GM12878 (cell line): ENCODE measurements at regions of chr10 and their contacts with region 1.

Region 1: GRCh38 chr10:73848821-73849489 is 25.4 kb downstream of the CAMK2G start:
- DNase-seq: peak; percentile 85
- ATAC-seq: peak; percentile 99
- H3K4me3 ChIP-seq: no peak overlapping the region
- H3K27ac ChIP-seq: no peak overlapping the region
- H3K4me1 ChIP-seq: peaks cover 5% of the 10 kb centered on the region; the same call in 1 of the 2 replicates
- H3K27me3 ChIP-seq: no peaks in the 10 kb centered on the region
- CTCF ChIP-seq: peak; percentile 99 to 100 (median 99); a peak in 5 of 6 replicates
- EP300 ChIP-seq: peak; percentile 93 to 97
- POLR2A ChIP-seq: no peak
- RAD21 ChIP-seq: peak; percentile 99

Region 2: DNA sequence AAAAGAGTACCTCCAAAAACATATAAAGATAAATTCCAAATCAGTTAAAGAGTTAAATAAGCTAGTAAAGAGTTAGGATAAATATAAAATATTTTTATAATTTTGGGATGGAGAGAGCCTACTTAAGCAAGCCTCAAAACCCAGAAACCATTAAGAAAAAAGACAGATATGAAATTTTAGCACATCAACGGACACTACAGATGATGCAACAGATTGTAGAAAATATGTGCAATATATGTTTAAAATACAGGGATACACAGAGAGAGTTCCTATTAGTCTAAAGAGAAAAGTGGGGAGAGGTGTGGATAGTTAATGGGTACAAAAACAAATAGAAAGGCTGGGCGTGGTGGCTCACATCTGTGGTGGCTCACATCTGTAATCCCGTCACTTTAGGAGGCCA is 234.2 kb before region 1 on chr10:
- CTCF ChIA-PET with region 1: no interaction called
- POLR2A ChIA-PET with region 1: no interaction called
- RAD21 ChIA-PET with region 1: no interaction called
- SMC1A ChIA-PET with region 1: no interaction called
- in situ Hi-C with region 1: no loop called
- intact Hi-C with region 1: no loop called
- DNase-seq: no peak
- ATAC-seq: no peak
- H3K4me3 ChIP-seq: no peak overlapping the region
- H3K27ac ChIP-seq: no peak overlapping the region
- H3K4me1 ChIP-seq: no peaks in the 10 kb centered on the region
- H3K27me3 ChIP-seq: no peaks in the 10 kb centered on the region
- CTCF ChIP-seq: no peak
- EP300 ChIP-seq: no peak
- POLR2A ChIP-seq: no peak
- RAD21 ChIP-seq: no peak

Region 3: DNA sequence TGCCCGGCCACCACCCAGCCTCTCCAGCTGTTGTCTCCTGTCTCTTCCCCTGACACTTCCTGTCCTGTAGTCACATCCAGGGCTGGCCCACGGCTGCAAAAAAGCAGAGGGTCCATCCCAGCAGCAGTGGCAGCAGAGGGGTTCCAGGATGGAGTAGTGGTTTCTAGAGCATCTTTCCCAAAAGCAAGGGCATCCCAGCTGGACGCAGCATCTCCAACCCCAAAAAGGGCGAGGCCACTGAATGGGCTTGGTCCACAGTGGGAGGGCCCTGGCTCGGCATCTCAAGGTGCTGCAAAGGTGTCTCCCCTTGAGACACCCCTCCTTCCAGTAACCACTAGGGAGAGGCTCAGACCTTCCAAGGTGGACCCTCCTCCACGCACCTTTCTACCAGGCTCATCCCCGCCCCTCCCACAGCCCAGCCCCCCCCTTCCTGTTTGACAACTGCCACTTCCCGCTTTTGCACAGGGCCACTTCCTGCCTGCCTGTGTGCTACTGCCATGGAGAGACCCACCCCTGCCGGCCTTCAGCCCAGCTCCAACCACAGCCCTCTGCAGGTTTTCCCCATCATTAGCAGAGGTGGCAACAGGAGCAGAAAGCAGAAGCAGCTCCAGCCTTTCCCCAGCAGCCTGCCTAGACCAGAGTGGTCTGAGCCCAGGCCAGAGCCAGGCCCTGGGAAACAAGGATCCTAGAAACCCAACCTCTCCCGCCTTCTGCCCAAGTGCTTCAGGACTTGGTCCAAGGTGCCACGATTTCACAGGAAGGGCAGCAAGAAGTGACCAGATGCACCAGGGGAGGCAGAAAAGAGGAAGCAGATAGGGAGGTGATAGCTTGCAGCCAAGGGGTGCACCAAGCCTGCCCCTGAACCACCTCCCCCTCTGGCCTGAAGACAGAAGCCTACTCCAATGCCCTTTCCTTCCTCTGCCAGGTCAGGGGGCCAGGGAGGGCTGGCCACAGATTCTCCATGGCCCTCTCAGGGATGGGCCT is 16.8 kb after region 1 on chr10:
- CTCF ChIA-PET with region 1: interaction called, 28 read pairs
- POLR2A ChIA-PET with region 1: interaction called, 16 read pairs
- RAD21 ChIA-PET with region 1: interaction called, 19 read pairs
- SMC1A ChIA-PET with region 1: interaction called, 32 read pairs
- in situ Hi-C with region 1: no loop called
- intact Hi-C with region 1: no loop called
- DNase-seq: no peak
- ATAC-seq: peak; percentile 95
- H3K4me3 ChIP-seq: peak overlapping the region; percentile 58; the same call in 1 of the 2 replicates
- H3K27ac ChIP-seq: peak overlapping the region; percentile 84
- H3K4me1 ChIP-seq: peaks cover 24% of the 10 kb centered on the region
- H3K27me3 ChIP-seq: no peaks in the 10 kb centered on the region
- CTCF ChIP-seq: peak in 1 of 3 experiments; percentile 14; a peak in 1 of 6 replicates
- EP300 ChIP-seq: 0 out of 4 replicates have a peak, but pooled peaks of 1 of the 2 experiments have one; percentile 33
- POLR2A ChIP-seq: no peak
- RAD21 ChIP-seq: no peak

Region 4: DNA sequence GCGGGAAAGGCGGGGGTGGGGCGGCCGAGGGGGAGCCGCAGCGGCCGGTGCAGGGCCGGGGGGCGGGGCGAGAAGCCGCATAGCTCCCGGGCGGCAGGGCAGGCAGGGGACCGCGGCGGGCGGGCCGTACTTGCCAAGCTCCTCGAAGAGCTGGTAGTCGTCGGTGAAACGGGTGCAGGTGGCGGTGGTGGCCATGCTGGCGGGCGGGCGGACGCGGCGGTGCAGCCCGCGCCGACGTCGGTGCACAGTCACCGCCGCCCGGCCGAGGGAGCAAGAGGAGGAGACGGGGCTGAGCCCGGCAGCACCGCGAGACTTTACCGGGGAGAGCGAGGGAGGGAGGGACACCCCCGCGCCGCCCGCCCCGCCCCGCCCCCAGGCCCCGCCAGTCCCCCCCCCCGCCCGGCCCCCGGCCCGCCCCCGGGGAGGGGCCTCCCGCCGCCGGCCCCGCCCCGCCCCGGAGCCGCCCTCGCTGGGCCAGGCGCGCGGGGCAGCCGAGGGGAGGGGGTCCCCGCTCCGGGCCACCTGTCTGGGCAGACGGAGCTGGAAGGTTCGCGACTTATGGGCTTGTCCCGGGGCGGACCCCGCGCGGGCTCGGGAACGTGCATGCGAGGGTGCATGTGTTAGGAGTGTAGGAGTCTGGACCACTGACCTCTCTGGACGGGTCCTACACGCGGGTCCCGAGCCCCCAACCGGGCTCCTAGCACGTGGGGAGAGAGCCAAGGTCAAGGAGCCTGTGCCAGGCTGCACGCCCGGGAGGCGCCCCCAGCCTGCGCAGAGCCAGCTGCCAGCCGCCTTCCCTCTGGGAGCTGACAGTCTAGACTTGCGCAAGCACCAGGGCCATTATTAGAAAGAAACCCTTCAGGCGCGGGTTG is 25.5 kb after region 1 on chr10 and contains the start of gene CAMK2G:
- CTCF ChIA-PET with region 1: interaction called, 440 read pairs
- POLR2A ChIA-PET with region 1: interaction called, 24 read pairs
- RAD21 ChIA-PET with region 1: interaction called, 299 read pairs
- SMC1A ChIA-PET with region 1: interaction called, 270 read pairs
- in situ Hi-C with region 1: no loop called
- intact Hi-C with region 1: loop called (anchors 1 kb)
- DNase-seq: no peak
- ATAC-seq: peak; percentile 88
- H3K4me3 ChIP-seq: peak within 1 kb of the TSS; percentile 84
- H3K27ac ChIP-seq: peak within 1 kb of the TSS; percentile 58
- H3K4me1 ChIP-seq: peaks cover 16% of the 10 kb centered on the region
- H3K27me3 ChIP-seq: no peaks in the 10 kb centered on the region
- CTCF ChIP-seq: no peak
- EP300 ChIP-seq: no peak
- POLR2A ChIP-seq: peak; percentile 89
- RAD21 ChIP-seq: no peak
- polyA plus RNA-seq, gene CAMK2G: 5.5 to 6.9 TPM

Region 5: DNA sequence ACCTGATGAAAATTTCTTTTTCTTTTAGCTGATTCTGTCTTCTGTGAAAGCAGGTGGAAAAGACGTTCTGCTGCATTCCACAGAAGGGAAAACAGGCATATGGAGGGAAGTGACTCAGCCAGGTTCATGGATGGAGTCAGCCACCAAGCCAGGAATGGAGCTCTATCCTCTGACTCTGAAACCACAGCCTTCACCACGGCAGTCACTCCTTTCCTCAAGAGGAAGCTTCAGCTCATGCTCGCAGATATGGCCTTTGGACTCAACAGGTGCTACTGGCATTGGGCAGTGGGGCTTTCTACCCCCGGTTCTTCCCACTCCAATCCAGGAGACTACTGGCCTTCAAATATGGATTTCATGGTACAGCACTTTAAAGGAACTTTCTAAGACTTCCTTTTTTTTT is 50.5 kb after region 1 on chr10:
- CTCF ChIA-PET with region 1: interaction called, 10 read pairs
- POLR2A ChIA-PET with region 1: no interaction called
- RAD21 ChIA-PET with region 1: interaction called, 3 read pairs
- SMC1A ChIA-PET with region 1: interaction called, 3 read pairs
- in situ Hi-C with region 1: no loop called
- intact Hi-C with region 1: no loop called
- DNase-seq: no peak
- ATAC-seq: no peak
- H3K4me3 ChIP-seq: no peak overlapping the region
- H3K27ac ChIP-seq: no peak overlapping the region
- H3K4me1 ChIP-seq: no peaks in the 10 kb centered on the region
- H3K27me3 ChIP-seq: no peaks in the 10 kb centered on the region; a peak in 1 of 4 replicates
- CTCF ChIP-seq: no peak
- EP300 ChIP-seq: no peak
- POLR2A ChIP-seq: no peak
- RAD21 ChIP-seq: no peak

Region 6: DNA sequence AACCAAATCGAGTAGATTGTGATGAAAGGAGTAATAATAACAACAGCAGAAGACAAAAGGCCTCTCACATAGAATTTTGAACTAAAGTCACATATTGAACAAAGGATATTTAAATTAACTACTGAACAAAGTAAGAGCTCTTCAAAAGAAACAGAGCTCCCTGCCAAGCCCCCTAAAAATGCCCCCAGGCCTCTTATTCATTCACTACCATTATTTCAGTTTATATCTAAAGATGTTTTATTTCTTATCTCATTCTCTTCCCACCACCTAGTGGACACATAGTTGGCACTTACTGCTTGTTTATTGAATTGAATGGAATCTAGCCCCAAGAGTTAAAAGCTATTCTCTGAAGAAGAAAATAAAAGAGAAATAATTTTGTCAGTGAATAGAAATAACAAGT is 186.3 kb after region 1 on chr10:
- CTCF ChIA-PET with region 1: no interaction called
- POLR2A ChIA-PET with region 1: no interaction called
- RAD21 ChIA-PET with region 1: no interaction called
- SMC1A ChIA-PET with region 1: no interaction called
- in situ Hi-C with region 1: no loop called
- intact Hi-C with region 1: no loop called
- DNase-seq: no peak
- ATAC-seq: no peak
- H3K4me3 ChIP-seq: no peak overlapping the region
- H3K27ac ChIP-seq: no peak overlapping the region
- H3K4me1 ChIP-seq: peaks cover 11% of the 10 kb centered on the region
- H3K27me3 ChIP-seq: no peaks in the 10 kb centered on the region
- CTCF ChIP-seq: peak in 1 of 3 experiments; percentile 14; a peak in 2 of 6 replicates
- EP300 ChIP-seq: no peak
- POLR2A ChIP-seq: no peak
- RAD21 ChIP-seq: peak; percentile 46; the same call in 1 of the 2 replicates